ENCODE measurements at regions of chr16 and their contacts with region 1.

Region 1: DNA sequence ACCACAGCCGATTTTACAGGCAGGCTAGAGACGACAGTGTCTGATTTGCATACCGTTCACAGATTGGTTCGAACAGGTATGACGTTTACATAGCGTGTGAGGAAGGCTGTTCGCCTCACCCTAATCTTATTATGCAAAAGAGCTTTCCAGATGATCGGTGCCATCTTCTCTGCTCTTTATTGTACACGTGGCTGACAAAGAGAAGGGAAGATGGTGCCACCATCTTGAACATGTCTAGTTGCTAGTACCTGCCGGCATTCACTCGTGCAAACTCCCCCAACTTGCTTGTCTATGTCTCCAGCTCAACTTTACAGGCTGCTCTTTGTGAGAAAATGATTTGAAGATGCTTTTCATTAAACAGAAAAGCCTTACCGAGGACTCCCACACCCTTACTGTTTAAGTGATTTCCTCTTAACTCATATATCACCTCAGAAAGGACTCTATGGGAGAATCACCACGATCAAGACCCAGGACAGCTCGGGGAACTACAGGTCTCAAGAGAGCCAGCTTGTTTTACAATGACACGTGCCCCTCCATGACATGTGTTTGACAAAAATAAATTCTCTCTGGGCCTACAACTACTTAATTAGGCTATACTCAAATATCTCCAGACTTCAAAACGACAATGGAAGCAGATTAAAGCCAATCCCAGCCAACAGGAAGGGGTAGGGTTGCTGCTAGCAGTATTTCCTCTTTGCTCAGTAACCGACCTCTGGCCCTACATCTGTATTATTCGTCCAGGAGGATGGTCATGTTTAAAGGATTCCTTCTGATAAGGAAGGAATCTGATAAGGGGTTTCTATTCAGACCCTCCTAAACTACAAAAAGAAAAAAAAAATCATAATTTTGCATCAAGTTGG is 480.6 kb downstream of the TMEM114 start:
- DNase-seq: peak; percentile 44 to 95 (median 65)
- ATAC-seq: peak; percentile 88
- H3K4me3 ChIP-seq: peak overlapping the region; percentile 55
- H3K27ac ChIP-seq: peak overlapping the region; percentile 94
- H3K4me1 ChIP-seq: peaks cover 4 to 14% of the 10 kb centered on the region in 2 experiments; a peak in 4 of 5 replicates
- H3K27me3 ChIP-seq: no peaks in the 10 kb centered on the region
- CTCF ChIP-seq: no peak
- EP300 ChIP-seq: peak; percentile 53
- POLR2A ChIP-seq: peak; percentile 94
- RAD21 ChIP-seq: no peak

Region 2: GRCh38 chr16:7675628-7676027 is 434.1 kb before region 1 on chr16:
- CTCF ChIA-PET with region 1: no interaction called
- POLR2A ChIA-PET with region 1: no interaction called
- in situ Hi-C with region 1: no loop called
- intact Hi-C with region 1: no loop called
- DNase-seq: no peak
- ATAC-seq: no peak
- H3K4me3 ChIP-seq: no peak overlapping the region
- H3K27ac ChIP-seq: no peak overlapping the region
- H3K4me1 ChIP-seq: no peaks in the 10 kb centered on the region
- H3K27me3 ChIP-seq: peaks cover 2 to 6% of the 10 kb centered on the region in 2 experiments; a peak in 2 of 5 replicates
- CTCF ChIP-seq: no peak
- EP300 ChIP-seq: no peak
- POLR2A ChIP-seq: no peak
- RAD21 ChIP-seq: no peak

Region 3: DNA sequence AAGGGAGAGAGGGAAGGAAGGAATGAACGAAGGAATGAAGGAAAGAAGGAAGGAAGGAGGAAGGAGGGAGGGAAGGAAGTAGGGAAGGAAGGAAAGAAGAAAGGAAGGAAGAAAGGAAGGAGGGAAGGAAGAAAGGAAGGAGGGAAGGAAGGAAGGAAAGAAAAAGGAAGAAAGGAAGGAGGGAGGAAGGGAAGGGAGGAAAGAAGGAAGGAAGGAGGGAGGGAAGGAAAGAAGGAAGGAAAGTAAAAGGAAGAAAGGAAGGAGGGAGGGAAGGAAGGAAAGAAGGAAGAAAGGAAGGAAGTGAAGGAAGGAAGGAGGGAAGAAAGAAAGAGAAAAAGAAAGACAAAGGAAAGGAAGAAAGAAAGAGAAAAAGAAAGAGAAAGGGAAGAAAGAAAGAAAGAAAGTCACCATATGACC is 334.7 kb before region 1 on chr16:
- CTCF ChIA-PET with region 1: no interaction called
- POLR2A ChIA-PET with region 1: no interaction called
- in situ Hi-C with region 1: no loop called
- intact Hi-C with region 1: no loop called
- DNase-seq: no peak
- ATAC-seq: no peak
- H3K4me3 ChIP-seq: no peak overlapping the region
- H3K27ac ChIP-seq: no peak overlapping the region
- H3K4me1 ChIP-seq: no peaks in the 10 kb centered on the region
- H3K27me3 ChIP-seq: peaks cover 0 to 4% of the 10 kb centered on the region in 2 experiments; a peak in 1 of 5 replicates
- CTCF ChIP-seq: no peak
- EP300 ChIP-seq: no peak
- POLR2A ChIP-seq: no peak
- RAD21 ChIP-seq: no peak

Region 4: DNA sequence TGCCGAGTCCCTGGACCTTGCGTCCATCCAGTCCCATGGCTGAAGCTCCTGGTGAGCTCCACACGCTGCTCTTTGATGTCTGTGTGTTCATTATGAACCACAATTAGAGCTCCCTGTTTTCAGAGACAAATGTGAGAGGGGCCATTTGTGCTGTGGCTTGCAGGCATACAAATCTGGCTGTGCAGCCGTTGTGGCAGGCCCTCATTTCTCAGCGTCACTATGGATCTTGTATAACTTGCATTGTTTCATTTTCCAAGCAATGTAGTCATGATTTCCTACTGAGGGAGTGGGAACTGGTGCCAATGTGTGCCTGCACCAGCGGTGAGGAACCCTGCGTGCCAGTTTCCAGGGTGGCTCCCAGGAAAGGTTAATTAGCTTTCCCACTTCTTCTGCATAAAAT is 62.0 kb before region 1 on chr16:
- CTCF ChIA-PET with region 1: no interaction called
- POLR2A ChIA-PET with region 1: interaction called, 3 read pairs
- in situ Hi-C with region 1: no loop called
- intact Hi-C with region 1: loop called (anchors 10 kb)
- DNase-seq: no peak
- ATAC-seq: no peak
- H3K4me3 ChIP-seq: no peak overlapping the region
- H3K27ac ChIP-seq: no peak overlapping the region
- H3K4me1 ChIP-seq: no peaks in the 10 kb centered on the region
- H3K27me3 ChIP-seq: no peaks in the 10 kb centered on the region
- CTCF ChIP-seq: no peak
- EP300 ChIP-seq: no peak
- POLR2A ChIP-seq: no peak
- RAD21 ChIP-seq: no peak

Region 5: GRCh38 chr16:8096211-8096610 is 13.5 kb before region 1 on chr16:
- CTCF ChIA-PET with region 1: no interaction called
- POLR2A ChIA-PET with region 1: interaction called, 28 read pairs
- in situ Hi-C with region 1: no loop called
- intact Hi-C with region 1: no loop called
- DNase-seq: no peak
- ATAC-seq: no peak; the same call in 2 of the 3 replicates
- H3K4me3 ChIP-seq: no peak overlapping the region
- H3K27ac ChIP-seq: no peak overlapping the region
- H3K4me1 ChIP-seq: peaks cover 0 to 5% of the 10 kb centered on the region in 2 experiments; a peak in 3 of 5 replicates
- H3K27me3 ChIP-seq: no peaks in the 10 kb centered on the region
- CTCF ChIP-seq: no peak
- EP300 ChIP-seq: no peak
- POLR2A ChIP-seq: no peak
- RAD21 ChIP-seq: no peak

Region 6: DNA sequence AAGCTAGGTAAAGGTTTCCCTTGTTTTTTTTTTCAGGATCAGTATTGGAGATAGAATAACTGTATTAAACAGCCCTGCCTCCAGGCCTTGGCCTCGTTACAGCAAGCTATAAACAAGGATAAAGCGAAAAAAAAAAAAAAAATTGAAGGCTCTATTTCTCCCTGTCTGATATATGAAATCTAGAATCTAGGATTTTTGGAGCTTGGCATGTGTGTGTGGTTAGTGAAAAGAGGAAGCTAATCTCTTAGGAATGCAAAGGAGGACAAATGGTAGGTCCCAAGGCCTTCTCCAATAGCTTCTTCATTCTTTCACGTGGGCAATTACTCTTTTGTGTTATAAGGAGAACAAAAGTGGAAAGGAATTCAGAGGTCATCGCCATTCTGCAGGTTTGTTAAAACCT is 10.3 kb after region 1 on chr16:
- CTCF ChIA-PET with region 1: no interaction called
- POLR2A ChIA-PET with region 1: interaction called, 11 read pairs
- in situ Hi-C with region 1: no loop called
- intact Hi-C with region 1: no loop called
- DNase-seq: no peak
- ATAC-seq: no peak
- H3K4me3 ChIP-seq: no peak overlapping the region
- H3K27ac ChIP-seq: no peak overlapping the region
- H3K4me1 ChIP-seq: 0 out of 5 replicates have a peak, but pooled peaks cover 0 to 3% of the 10 kb centered on the region in 2 experiments
- H3K27me3 ChIP-seq: no peaks in the 10 kb centered on the region; a peak in 1 of 5 replicates
- CTCF ChIP-seq: no peak
- EP300 ChIP-seq: no peak
- POLR2A ChIP-seq: no peak
- RAD21 ChIP-seq: no peak

Region 7: GRCh38 chr16:8138666-8139065 is 28.9 kb after region 1 on chr16:
- CTCF ChIA-PET with region 1: no interaction called
- POLR2A ChIA-PET with region 1: no interaction called
- in situ Hi-C with region 1: no loop called
- intact Hi-C with region 1: no loop called
- DNase-seq: no peak
- ATAC-seq: no peak
- H3K4me3 ChIP-seq: no peak overlapping the region
- H3K27ac ChIP-seq: no peak overlapping the region
- H3K4me1 ChIP-seq: peaks cover 0 to 2% of the 10 kb centered on the region in 2 experiments; a peak in 1 of 5 replicates
- H3K27me3 ChIP-seq: peaks cover 9 to 12% of the 10 kb centered on the region in 2 experiments
- CTCF ChIP-seq: no peak
- EP300 ChIP-seq: no peak
- POLR2A ChIP-seq: no peak
- RAD21 ChIP-seq: no peak

Region 8: DNA sequence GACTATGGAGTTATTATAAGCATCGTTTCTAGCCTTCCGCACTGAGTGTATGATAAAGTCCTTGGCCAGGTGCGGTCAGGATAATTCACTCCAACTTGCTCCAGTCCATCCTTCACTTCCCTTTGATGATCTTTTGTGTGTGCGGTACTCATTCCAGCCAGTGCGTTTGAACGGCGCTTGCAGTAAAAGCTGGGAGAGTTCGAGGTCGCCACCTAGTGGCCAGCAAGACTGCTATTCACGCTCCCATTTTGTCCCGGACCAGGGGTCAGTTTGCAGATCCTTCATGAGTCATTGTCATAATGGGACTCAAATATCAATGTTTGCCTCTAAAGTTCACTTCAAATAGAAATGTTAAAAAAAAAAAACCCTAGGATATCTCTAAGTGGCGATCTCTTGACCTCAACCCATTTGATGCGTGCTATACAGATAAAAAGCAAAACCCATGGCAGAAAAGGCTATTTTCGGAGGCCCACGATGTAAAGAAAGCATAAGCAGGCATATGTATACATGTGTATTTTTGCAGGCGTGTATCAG is 63.4 kb after region 1 on chr16:
- CTCF ChIA-PET with region 1: no interaction called
- POLR2A ChIA-PET with region 1: no interaction called
- in situ Hi-C with region 1: no loop called
- intact Hi-C with region 1: loop called (anchors 2 kb)
- DNase-seq: peak; percentile 85 to 94 (median 87)
- ATAC-seq: peak; percentile 100
- H3K4me3 ChIP-seq: no peak overlapping the region
- H3K27ac ChIP-seq: no peak overlapping the region
- H3K4me1 ChIP-seq: peaks cover 0 to 1% of the 10 kb centered on the region in 2 experiments; a peak in 2 of 5 replicates
- H3K27me3 ChIP-seq: peaks cover 19% of the 10 kb centered on the region in 2 experiments
- CTCF ChIP-seq: peak; percentile 99 to 100 (median 100)
- EP300 ChIP-seq: no peak
- POLR2A ChIP-seq: no peak
- RAD21 ChIP-seq: peak; percentile 84 to 93

Region 9: DNA sequence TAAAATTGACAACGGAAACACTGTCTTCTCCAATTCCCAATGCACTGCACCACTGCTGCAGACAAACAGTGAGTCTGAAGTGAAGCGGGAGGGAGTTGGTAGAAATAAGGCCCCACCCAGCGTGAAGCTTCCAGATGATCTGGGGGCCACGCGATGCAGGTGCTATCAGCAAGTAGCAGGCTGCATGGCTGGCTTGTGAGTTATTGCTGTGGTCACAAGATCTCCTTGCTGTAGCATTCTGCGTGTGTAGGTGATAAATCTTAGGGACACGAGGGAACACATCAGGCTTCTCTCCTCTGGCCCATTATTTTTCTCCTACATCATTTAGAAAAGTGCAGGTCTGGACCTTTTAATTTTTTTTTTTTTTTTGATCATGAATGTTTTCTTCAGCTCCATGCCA is 73.0 kb after region 1 on chr16:
- CTCF ChIA-PET with region 1: no interaction called
- POLR2A ChIA-PET with region 1: interaction called, 4 read pairs
- in situ Hi-C with region 1: no loop called
- intact Hi-C with region 1: loop called (anchors 2 kb)
- DNase-seq: peak; percentile 94 to 97 (median 95)
- ATAC-seq: peak; percentile 98
- H3K4me3 ChIP-seq: no peak overlapping the region
- H3K27ac ChIP-seq: peak overlapping the region; percentile 19; the same call in 2 of the 3 replicates
- H3K4me1 ChIP-seq: peaks cover 10 to 26% of the 10 kb centered on the region in 2 experiments; a peak in 4 of 5 replicates
- H3K27me3 ChIP-seq: peaks cover 0 to 8% of the 10 kb centered on the region in 2 experiments; a peak in 2 of 5 replicates
- CTCF ChIP-seq: no peak
- EP300 ChIP-seq: peak; percentile 97
- POLR2A ChIP-seq: no peak
- RAD21 ChIP-seq: peak in 1 of 2 experiments; percentile 22; a peak in 2 of 4 replicates

Measured in K562 (cell line).